ENCODE measurements at regions of chr20 and their contacts with region 1.

Region 1: GRCh38 chr20:35454881-35455609 is at the start of gene CEP250:
- DNase-seq: peak; percentile 88 to 96 (median 93)
- ATAC-seq: peak; percentile 95 to 99 (median 98)
- H3K4me3 ChIP-seq: peak within 1 kb of the TSS; percentile 97 to 99
- H3K4me3 Mint-ChIP-seq: peak within 1 kb of the TSS; percentile 86 to 94 (median 93)
- H3K27ac ChIP-seq: peak within 1 kb of the TSS; percentile 90
- H3K27ac Mint-ChIP-seq: peak within 1 kb of the TSS; percentile 98 to 99
- H3K4me1 ChIP-seq: peaks cover 7 to 19% of the 10 kb centered on the region in 2 experiments
- H3K4me1 Mint-ChIP-seq: peaks cover 8 to 29% (median 22%) of the 10 kb centered on the region in 3 donors
- H3K27me3 ChIP-seq: no peaks in the 10 kb centered on the region
- H3K27me3 Mint-ChIP-seq: no peaks in the 10 kb centered on the region
- total RNA-seq, gene CEP250: 45.7 to 70.7 (median 67.4) TPM

Region 2: GRCh38 chr20:34437330-34437986 is 1017.6 kb before region 1 on chr20:
- CTCF ChIA-PET with region 1: no interaction called
- POLR2A ChIA-PET with region 1: interaction called in 1 of 2 experiments, 12 read pairs
- DNase-seq: no peak
- ATAC-seq: no peak
- H3K4me3 ChIP-seq: no peak overlapping the region
- H3K4me3 Mint-ChIP-seq: no peak overlapping the region
- H3K27ac ChIP-seq: no peak overlapping the region
- H3K27ac Mint-ChIP-seq: peak overlapping the region in 1 of 2 donors; percentile 64
- H3K4me1 ChIP-seq: peaks cover 0 to 4% of the 10 kb centered on the region in 2 experiments
- H3K4me1 Mint-ChIP-seq: peaks cover 3 to 26% (median 18%) of the 10 kb centered on the region in 3 donors
- H3K27me3 ChIP-seq: no peaks in the 10 kb centered on the region
- H3K27me3 Mint-ChIP-seq: no peaks in the 10 kb centered on the region